Astrocyte of the cerebellum (primary cell): ENCODE measurements at regions of chr5 and their contacts with region 1.

Region 1: GRCh38 chr5:53151713-53152458 is 42.3 kb upstream of the MOCS2 start:
- DNase-seq: peak; percentile 96
- H3K4me3 ChIP-seq: no peak overlapping the region
- CTCF ChIP-seq: no peak

Region 2: DNA sequence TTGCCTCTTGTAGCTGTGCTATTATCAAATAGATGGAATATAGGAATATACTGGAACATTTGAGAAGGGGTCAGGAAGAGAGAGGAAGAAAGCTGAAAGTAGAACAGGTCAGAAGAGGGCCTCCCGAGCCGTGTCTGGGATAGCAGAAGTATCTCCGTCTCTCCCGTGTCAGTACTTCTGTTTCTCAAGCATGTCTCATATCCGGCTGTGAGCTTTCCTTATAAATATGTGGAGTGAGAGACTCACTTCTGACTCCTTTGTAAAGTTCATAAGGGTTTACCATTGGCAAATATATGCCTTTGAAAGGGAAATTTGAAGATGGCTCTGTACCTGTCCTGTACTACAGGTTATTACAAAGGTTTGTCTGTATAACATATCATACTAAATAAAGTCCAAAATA is 92.6 kb before region 1 on chr5:
- in situ Hi-C with region 1: no loop called
- DNase-seq: no peak
- H3K4me3 ChIP-seq: no peak overlapping the region
- CTCF ChIP-seq: no peak

Region 3: GRCh38 chr5:53249529-53250200 is 97.8 kb after region 1 on chr5:
- in situ Hi-C with region 1: loop called (anchors 5 kb)
- DNase-seq: peak; percentile 94
- H3K4me3 ChIP-seq: no peak overlapping the region
- CTCF ChIP-seq: no peak